ENCODE measurements at regions of chr20 and their contacts with region 1.

Region 1: GRCh38 chr20:48657475-48658470 is 170.0 kb downstream of the PREX1 start:
- DNase-seq: peak; percentile 87

Region 2: DNA sequence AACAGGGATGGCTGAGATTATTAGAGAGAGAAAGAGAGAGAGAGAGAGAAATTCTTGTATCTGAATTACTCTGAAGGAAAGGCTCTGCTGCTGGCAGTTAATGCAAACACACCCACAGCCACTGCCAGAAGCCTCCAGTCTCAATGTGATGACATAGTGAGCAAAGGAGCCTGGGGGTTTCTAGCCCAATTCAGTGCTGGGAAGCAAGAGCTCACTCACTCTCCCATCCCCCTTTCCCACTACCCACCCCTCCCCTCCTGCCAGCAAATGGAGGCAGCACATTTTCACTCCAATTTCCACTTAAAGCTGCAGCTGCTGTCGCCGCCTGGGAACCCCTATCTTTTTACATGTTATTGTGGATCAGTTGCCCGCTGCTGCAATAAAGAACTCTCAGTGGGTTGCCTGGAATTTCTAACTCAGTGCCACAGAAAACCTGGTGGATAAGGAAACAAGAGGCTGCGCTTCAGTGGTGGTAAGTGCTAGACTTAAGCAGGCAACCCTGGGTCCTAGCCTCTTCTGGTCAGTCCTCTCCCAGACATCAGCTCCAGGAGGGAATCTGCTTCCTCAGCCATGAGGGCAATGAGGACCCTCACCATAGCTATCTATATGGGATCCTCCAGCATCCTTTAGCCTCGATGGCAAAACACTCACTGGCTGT is 382.0 kb before region 1 on chr20:
- in situ Hi-C with region 1: no loop called
- DNase-seq: no peak

Region 3: DNA sequence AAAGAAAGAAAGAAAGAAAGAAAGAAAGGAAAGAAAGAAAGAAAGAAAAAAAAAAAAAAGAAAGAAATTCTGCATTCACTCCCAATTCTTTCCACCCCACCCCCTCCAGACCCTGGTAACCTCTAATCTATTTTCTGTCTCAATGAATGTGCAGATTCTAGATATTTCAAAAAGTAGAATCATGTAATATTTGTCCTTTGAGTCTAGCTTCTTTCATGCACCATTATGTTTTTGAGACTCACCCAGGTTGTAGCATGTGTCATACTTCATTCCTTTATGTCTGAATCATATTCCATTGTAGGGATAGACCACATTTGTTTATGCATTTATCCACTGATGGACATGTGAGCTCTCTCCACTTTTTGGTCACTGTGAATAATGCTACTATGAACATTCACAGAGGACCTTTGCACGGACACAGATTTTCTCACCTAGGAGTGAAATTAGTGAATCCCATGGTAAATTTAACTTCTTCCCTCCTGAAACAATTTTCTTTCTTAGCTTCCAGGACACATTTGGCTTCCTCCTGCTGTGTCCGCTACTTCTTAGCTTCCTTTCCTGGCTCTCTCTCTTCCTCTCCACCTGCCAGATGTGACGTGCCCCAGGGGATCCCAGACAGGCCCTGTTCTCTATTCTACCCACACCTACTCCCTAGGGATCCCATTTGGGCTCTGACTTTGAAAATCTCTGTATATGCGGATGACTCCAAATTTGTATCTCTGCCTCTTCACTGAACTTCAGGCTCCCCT is 239.6 kb after region 1 on chr20:
- in situ Hi-C with region 1: loop called (anchors 10 kb)
- DNase-seq: no peak

Measured in KBM-7 (cell line).